BJ (cell line): ENCODE measurements at regions of chr19 and their contacts with region 1.

Region 1: GRCh38 chr19:2061495-2062381 is 10.7 kb upstream of the MKNK2 start:
- DNase-seq: peak; percentile 78
- H3K4me3 ChIP-seq: peak overlapping the region; percentile 44
- H3K27me3 ChIP-seq: no peaks in the 10 kb centered on the region
- CTCF ChIP-seq: no peak

Region 2: DNA sequence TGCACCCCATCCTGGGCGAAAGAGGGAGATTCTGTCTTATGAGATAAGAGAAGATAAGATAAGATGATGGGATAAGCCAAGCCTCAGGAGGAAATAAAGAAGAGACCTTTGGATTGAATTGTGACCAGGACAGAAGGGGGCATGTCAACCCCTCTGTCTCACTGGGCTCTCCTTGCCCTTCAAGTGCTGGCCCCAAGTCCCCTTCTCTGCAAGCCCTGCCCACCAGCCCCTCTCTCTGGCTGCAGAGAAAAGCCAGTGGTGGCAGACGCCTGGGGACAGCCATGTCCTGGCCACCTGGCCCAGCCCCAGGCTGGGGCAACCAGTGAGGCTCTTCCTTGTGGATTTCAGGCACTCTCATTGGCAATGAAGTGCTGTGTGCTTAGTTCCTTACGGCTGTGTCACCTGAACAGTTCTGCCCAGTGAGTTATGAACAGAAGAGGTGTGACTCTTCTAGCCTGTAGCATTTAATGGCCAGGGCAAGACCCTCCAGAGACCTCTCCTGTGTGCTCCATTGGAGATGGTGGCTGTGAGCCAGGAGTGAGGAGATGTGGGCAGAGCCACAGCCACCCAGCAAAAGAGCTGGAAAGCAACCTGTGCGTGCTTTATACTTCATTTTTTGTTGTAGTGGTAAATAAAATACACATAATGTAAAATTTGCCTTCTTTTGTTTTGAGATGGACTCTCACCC is 40.1 kb before region 1 on chr19:
- CTCF ChIA-PET with region 1: interaction called, 16 read pairs
- POLR2A ChIA-PET with region 1: no interaction called
- DNase-seq: no peak
- H3K4me3 ChIP-seq: no peak overlapping the region
- H3K27me3 ChIP-seq: no peaks in the 10 kb centered on the region
- CTCF ChIP-seq: no peak

Region 3: GRCh38 chr19:2041683-2042484 is 19.9 kb before region 1 on chr19:
- CTCF ChIA-PET with region 1: no interaction called
- POLR2A ChIA-PET with region 1: interaction called, 19 read pairs
- DNase-seq: no peak
- H3K4me3 ChIP-seq: no peak overlapping the region
- H3K27me3 ChIP-seq: no peaks in the 10 kb centered on the region
- CTCF ChIP-seq: no peak